PC-9 (cell line): ENCODE measurements at regions of chr10 and their contacts with region 1.

Region 1: DNA sequence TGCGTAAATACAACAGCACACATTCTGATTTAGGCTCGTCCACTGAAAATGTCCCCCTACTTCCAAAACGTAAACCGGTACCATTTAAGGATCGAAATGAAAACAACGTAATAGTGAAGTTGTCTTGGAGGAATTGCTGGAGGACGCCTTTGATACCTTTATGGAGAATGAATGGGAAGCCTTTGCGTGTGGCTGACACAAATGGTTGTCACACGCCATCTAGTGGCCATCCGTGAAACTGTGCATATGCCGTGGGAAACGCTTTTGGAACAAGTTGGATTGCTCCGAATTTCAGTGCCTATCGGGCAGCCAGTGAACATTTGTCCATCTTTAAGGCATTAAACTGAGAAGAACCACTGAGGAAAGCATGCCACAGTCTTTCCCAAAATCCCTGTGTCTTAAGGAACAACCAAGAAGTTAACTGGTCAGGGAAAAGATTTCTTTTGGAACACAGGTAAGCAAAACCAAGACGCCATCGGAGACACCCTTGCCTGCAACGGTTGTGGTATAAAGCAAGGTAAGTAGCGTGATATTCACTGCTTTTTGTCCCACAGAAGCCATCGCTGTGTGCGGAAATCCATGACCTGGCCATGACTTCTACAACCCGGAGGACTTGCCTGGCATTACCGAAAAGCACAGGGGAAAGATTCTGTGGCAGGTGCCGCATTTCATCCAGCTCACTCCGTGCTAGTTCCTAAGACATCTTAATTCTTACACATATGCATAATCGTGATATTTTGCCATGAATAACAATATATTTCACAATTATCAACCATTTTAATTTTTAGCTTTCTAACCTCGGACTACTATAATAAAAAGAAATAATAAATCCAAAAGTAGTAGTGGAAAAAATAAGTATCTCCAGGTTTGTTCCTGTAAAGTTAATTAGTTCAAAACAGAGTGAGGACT is 100.6 kb downstream of the FAM204A start:
- DNase-seq: peak; percentile 35 to 56
- H3K4me3 ChIP-seq: no peak overlapping the region
- H3K27ac ChIP-seq: no peak overlapping the region
- H3K4me1 ChIP-seq: no peaks in the 10 kb centered on the region
- H3K27me3 ChIP-seq: peaks cover 70% of the 10 kb centered on the region
- CTCF ChIP-seq: peak; percentile 84

Region 2: GRCh38 chr10:117442944-117443685 is 798.4 kb before region 1 on chr10:
- CTCF ChIA-PET with region 1: no interaction called
- POLR2A ChIA-PET with region 1: no interaction called
- intact Hi-C with region 1: loop called (anchors 1 kb)
- DNase-seq: peak; percentile 52 to 59
- H3K4me3 ChIP-seq: peak overlapping the region; percentile 34; the same call in 1 of the 2 replicates
- H3K27ac ChIP-seq: peak overlapping the region; percentile 58
- H3K4me1 ChIP-seq: peaks cover 23% of the 10 kb centered on the region
- H3K27me3 ChIP-seq: no peaks in the 10 kb centered on the region
- CTCF ChIP-seq: peak; percentile 85

Region 3: GRCh38 chr10:117496616-117497028 is 744.9 kb before region 1 on chr10:
- CTCF ChIA-PET with region 1: no interaction called
- POLR2A ChIA-PET with region 1: no interaction called
- intact Hi-C with region 1: loop called (anchors 1 kb)
- DNase-seq: peak; percentile 57 to 58
- H3K4me3 ChIP-seq: no peak overlapping the region
- H3K27ac ChIP-seq: no peak overlapping the region
- H3K4me1 ChIP-seq: no peaks in the 10 kb centered on the region
- H3K27me3 ChIP-seq: peaks cover 11% of the 10 kb centered on the region
- CTCF ChIP-seq: peak; percentile 86

Region 4: DNA sequence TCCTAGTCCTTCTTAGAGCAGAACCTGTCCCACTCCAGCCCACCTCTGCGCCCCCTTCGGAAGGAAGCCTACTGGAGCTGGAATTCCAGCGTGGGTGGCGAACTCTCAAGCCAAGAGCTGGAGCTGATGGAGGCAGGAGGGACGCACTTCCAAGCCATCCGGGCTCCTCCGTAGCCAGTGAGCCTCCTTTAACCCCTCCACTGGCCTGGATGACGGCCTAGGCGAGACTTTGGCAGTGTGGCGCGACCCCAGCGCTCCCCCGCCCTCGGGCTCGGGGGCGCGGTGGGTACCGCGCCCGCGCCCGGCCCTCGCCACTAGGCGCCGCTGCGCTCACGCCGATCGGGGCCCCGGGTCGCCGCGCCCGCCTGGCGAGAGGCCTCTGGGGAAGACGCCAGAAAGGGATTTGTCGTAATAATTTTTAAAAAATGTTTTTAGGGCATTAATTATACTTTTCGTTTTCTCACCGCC is 704.0 kb before region 1 on chr10:
- CTCF ChIA-PET with region 1: no interaction called
- POLR2A ChIA-PET with region 1: no interaction called
- intact Hi-C with region 1: loop called (anchors 2 kb)
- DNase-seq: peak in 1 of 2 experiments; percentile 4
- H3K4me3 ChIP-seq: no peak overlapping the region
- H3K27ac ChIP-seq: no peak overlapping the region
- H3K4me1 ChIP-seq: no peaks in the 10 kb centered on the region
- H3K27me3 ChIP-seq: peaks cover 10% of the 10 kb centered on the region; the same call in 1 of the 2 replicates
- CTCF ChIP-seq: no peak

Region 5: DNA sequence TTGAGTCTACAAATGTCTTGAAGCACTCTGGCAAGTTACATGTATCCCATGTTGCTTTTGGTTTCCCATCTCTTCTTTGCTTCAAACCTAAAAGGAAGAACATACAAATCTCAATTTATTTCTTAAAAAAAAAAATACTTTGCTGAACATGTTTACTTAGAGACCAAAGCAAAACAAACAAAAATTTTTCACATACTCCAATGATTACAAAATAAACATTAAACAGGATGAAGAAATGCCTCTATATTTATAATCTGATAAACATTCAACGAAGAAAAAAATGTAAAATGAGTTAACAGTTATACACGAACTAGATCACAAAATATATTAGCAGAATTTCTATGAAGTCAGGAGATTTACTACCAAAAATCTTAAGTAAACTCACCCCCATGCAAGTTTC is 69.3 kb after region 1 on chr10:
- CTCF ChIA-PET with region 1: no interaction called
- POLR2A ChIA-PET with region 1: no interaction called
- intact Hi-C with region 1: no loop called
- DNase-seq: peak in 1 of 2 experiments; percentile 52
- H3K4me3 ChIP-seq: no peak overlapping the region
- H3K27ac ChIP-seq: no peak overlapping the region
- H3K4me1 ChIP-seq: peaks cover 9% of the 10 kb centered on the region
- H3K27me3 ChIP-seq: no peaks in the 10 kb centered on the region
- CTCF ChIP-seq: no peak

Region 6: GRCh38 chr10:118557946-118558345 is 316.5 kb after region 1 on chr10:
- CTCF ChIA-PET with region 1: no interaction called
- POLR2A ChIA-PET with region 1: no interaction called
- intact Hi-C with region 1: loop called (anchors 10 kb)
- DNase-seq: no peak
- H3K4me3 ChIP-seq: no peak overlapping the region
- H3K27ac ChIP-seq: no peak overlapping the region
- H3K4me1 ChIP-seq: no peaks in the 10 kb centered on the region
- H3K27me3 ChIP-seq: no peaks in the 10 kb centered on the region
- CTCF ChIP-seq: no peak